K562 (cell line): ENCODE measurements at regions of chr7 and their contacts with region 1.

Region 1: GRCh38 chr7:48299580-48300169 is 128.4 kb downstream of the ABCA13 start:
- DNase-seq: peak; percentile 40 to 58 (median 47)
- ATAC-seq: peak; percentile 95
- H3K4me3 ChIP-seq: no peak overlapping the region
- H3K27ac ChIP-seq: no peak overlapping the region
- H3K4me1 ChIP-seq: no peaks in the 10 kb centered on the region
- H3K27me3 ChIP-seq: no peaks in the 10 kb centered on the region
- CTCF ChIP-seq: peak; percentile 55 to 69 (median 63)
- EP300 ChIP-seq: no peak
- POLR2A ChIP-seq: no peak
- RAD21 ChIP-seq: peak; percentile 62 to 78

Region 2: GRCh38 chr7:48337012-48337621 is 37.4 kb after region 1 on chr7:
- CTCF ChIA-PET with region 1: no interaction called
- POLR2A ChIA-PET with region 1: no interaction called
- in situ Hi-C with region 1: no loop called
- intact Hi-C with region 1: no loop called
- DNase-seq: peak in 1 of 4 experiments; percentile 7
- ATAC-seq: peak; percentile 42; the same call in 1 of the 3 replicates
- H3K4me3 ChIP-seq: no peak overlapping the region
- H3K27ac ChIP-seq: no peak overlapping the region
- H3K4me1 ChIP-seq: no peaks in the 10 kb centered on the region
- H3K27me3 ChIP-seq: no peaks in the 10 kb centered on the region
- CTCF ChIP-seq: peak in 1 of 3 experiments; percentile 4; a peak in 1 of 6 replicates
- EP300 ChIP-seq: no peak
- POLR2A ChIP-seq: no peak
- RAD21 ChIP-seq: peak in 1 of 2 experiments; percentile 30; a peak in 2 of 4 replicates

Region 3: DNA sequence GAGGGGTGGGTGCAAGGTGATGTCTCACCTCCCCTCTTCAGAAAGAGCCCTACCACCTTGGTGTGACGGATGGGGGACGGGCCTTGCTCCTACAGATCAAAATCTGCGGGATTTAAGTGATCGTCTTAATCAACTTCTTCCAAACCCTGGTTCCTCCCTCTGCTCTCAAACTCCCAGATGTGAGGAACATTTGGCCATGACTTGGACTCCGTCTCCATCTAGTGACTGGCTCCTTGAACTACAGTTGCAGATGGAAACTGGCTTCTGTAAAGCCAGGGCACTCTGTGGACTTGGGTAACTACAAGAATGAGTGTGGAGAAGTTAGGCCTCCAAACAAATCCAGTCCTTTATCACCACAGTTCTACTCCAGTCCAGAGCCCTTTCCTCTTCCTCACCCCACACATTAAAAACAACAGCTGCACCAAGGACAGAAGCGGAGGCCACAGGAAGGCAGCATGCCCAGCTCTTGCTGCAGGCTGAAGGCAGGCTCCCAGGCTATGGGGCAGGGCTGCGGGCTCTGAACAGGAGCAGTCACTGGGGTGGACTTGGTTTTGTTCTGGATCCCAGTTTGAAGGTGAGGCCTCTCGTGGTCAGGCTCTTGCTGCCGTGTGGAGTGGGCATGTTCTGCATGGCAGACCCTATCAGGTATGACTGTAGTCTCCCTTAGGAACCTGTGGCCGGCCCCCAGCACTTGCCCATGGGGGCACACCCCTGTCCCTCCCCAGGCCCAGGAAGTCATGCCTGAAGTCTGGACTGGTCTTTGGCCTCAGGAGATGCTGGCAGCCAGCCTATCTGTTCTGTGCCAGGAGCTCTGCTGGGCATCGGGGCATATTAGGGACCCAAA is 1553.2 kb after region 1 on chr7:
- CTCF ChIA-PET with region 1: no interaction called
- POLR2A ChIA-PET with region 1: no interaction called
- in situ Hi-C with region 1: no loop called
- intact Hi-C with region 1: loop called (anchors 5 kb)
- DNase-seq: peak; percentile 23 to 46 (median 35)
- ATAC-seq: peak; percentile 78
- H3K4me3 ChIP-seq: no peak overlapping the region
- H3K27ac ChIP-seq: no peak overlapping the region
- H3K4me1 ChIP-seq: no peaks in the 10 kb centered on the region
- H3K27me3 ChIP-seq: no peaks in the 10 kb centered on the region
- CTCF ChIP-seq: peak; percentile 55 to 70 (median 69)
- EP300 ChIP-seq: no peak
- POLR2A ChIP-seq: no peak
- RAD21 ChIP-seq: peak; percentile 48 to 80